Posterior vena cava (tissue), 2 donors: ENCODE measurements at regions of chr1 and their contacts with region 1.

Region 1: DNA sequence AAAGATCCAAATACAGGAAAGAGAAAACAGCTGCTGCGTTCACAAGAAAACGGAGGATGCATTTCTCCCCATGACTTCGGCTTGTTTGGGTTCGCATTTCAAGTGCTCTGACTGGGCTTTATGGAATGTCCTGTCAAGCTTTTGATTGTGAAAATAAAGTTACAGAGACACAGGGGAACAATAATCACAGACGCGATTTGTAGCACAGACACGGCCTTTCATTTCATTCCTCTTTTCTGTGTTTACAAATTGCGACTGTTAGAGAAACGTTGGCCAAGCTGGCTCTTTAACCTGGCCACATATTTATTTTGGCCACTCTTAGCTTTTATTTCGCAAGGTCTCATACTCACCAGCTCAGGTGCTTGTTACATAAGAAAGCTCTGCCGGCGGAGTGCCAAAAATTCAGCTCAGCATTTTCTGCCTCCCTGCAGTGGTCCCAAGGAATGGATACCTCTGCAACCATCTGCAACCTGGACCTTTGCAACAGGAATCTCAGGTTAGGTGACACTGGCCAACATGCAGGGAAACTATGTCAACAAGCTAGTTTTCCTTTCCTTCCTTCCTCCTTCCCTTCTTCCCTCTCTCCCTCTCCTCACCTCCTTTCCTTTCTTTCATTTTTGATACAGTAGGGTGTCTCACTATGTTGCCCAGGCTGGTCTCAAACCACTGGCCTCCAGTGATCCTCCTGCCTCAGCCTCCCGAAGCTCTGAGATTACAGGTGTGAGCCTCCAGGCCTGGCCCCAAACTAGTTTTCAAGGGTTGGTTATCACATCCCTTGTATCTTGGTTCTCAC is 58.2 kb upstream of the SLC45A1 start:
- DNase-seq: peak; percentile 62

Region 2: DNA sequence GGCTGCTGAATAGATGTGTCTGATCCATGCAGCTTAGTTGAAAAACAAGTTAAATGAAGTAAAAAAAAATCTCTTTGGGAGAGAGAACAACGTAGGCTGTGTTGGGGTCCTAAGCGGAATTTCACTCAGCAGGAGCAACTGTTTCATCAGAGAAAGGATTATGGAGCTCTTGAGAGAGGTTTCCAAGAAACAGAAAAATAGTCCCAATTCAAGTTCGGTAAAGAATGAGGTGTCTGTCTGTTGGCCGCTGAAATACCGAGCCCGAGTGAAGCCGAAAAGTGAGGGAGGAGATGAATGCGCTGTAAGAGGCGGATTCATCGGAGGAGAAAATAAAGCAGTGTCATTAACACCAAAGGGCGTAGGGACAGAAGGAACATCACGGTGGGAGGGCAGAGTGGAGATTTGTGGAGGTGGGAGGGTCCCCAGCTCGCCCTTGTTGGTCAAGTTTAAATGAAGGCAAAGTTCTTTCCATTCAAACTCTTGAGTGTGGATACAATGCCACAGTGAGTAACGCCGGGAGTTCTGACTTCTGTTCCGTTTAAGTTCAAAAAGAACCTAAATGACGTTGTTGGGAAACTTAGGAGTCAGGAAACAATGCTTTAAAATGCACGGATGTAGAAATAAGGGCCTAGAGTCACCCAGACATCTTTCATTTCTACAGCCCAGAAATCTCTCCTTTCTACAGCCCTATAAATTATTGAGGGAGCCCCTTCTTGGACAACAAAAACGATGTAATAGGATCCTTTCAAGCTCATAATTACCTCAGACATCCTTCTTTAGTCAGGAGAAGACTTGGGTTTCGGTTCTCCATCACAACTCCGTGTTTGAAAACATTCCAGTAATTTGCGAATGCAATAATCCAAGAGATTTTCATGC is 42.6 kb after region 1 on chr1:
- intact Hi-C with region 1: loop called in 1 of 2 experiments (anchors 10 kb)
- DNase-seq: no peak

Region 3: GRCh38 chr1:8560611-8561544 is 301.2 kb after region 1 on chr1:
- intact Hi-C with region 1: no loop called
- DNase-seq: no peak

Region 4: GRCh38 chr1:8632102-8632501 is 372.4 kb after region 1 on chr1:
- intact Hi-C with region 1: no loop called
- DNase-seq: no peak